ENCODE measurements at regions of chr7 and their contacts with region 1.

Region 1: GRCh38 chr7:101217388-101218235 is at the starts of genes PLOD3 and ZNHIT1:
- DNase-seq: peak; percentile 98
- ATAC-seq: peak; percentile 74
- H3K4me3 Mint-ChIP-seq: peak within 1 kb of the TSS; percentile 93
- H3K27ac Mint-ChIP-seq: peak within 1 kb of the TSS; percentile 84
- H3K4me1 Mint-ChIP-seq: peaks cover 27% of the 10 kb centered on the region
- H3K27me3 Mint-ChIP-seq: no peaks in the 10 kb centered on the region
- total RNA-seq, gene PLOD3: 41.6 to 42.3 TPM
- total RNA-seq, gene ZNHIT1: 56.6 to 57.1 TPM

Region 2: DNA sequence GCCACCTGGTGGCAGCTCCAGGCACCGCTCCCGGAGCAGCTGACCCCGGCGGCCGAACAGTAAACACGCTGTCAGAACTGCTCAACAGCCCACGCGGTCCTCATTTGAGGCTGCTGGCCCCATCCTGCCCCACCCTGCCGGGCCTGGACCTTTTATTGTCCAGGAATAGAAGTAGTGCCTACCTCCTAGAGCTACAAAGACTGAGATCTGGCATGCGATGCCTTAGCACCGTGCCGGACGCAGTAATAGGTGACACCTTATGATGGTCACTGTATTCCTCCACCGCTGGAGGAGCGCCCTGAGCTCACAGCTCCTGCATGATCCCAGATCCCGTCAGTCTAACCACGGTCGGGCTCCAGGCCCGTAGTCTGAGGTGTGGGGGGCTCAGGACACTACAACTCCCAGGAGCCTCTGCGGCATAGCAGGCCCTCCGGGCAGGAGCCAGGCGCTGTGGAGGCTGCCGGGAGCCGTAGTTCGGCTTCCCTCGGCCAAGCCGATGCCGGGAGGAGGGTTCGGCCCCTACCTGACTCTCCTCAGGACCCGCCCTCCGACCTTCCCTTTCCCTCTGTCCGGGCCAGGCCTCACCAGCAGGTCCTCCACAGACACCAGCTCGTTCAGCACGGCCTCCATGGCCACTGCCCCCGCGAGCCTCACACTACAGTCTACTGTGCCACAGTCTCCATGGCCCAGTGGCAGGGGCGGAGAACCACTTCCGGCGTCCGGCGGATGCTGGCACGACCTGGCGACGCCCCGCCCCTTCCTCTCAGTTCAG is 26.9 kb after region 1 on chr7 and contains the start of gene FIS1:
- CTCF ChIA-PET with region 1: interaction called, 69 read pairs
- DNase-seq: peak; percentile 95
- ATAC-seq: peak; percentile 97
- H3K4me3 Mint-ChIP-seq: peak within 1 kb of the TSS; percentile 91
- H3K27ac Mint-ChIP-seq: peak within 1 kb of the TSS; percentile 94
- H3K4me1 Mint-ChIP-seq: peaks cover 31% of the 10 kb centered on the region
- H3K27me3 Mint-ChIP-seq: no peaks in the 10 kb centered on the region
- total RNA-seq, gene FIS1: 86.7 to 117 TPM

Region 3: GRCh38 chr7:101251871-101252659 is 34.5 kb after region 1 on chr7:
- CTCF ChIA-PET with region 1: interaction called, 17 read pairs
- DNase-seq: peak; percentile 100
- ATAC-seq: peak; percentile 100
- H3K4me3 Mint-ChIP-seq: peak overlapping the region; percentile 89
- H3K27ac Mint-ChIP-seq: peak overlapping the region; percentile 92
- H3K4me1 Mint-ChIP-seq: peaks cover 28% of the 10 kb centered on the region
- H3K27me3 Mint-ChIP-seq: no peaks in the 10 kb centered on the region